GM12878 (cell line): ENCODE measurements at regions of chr6 and their contacts with region 1.

Region 1: DNA sequence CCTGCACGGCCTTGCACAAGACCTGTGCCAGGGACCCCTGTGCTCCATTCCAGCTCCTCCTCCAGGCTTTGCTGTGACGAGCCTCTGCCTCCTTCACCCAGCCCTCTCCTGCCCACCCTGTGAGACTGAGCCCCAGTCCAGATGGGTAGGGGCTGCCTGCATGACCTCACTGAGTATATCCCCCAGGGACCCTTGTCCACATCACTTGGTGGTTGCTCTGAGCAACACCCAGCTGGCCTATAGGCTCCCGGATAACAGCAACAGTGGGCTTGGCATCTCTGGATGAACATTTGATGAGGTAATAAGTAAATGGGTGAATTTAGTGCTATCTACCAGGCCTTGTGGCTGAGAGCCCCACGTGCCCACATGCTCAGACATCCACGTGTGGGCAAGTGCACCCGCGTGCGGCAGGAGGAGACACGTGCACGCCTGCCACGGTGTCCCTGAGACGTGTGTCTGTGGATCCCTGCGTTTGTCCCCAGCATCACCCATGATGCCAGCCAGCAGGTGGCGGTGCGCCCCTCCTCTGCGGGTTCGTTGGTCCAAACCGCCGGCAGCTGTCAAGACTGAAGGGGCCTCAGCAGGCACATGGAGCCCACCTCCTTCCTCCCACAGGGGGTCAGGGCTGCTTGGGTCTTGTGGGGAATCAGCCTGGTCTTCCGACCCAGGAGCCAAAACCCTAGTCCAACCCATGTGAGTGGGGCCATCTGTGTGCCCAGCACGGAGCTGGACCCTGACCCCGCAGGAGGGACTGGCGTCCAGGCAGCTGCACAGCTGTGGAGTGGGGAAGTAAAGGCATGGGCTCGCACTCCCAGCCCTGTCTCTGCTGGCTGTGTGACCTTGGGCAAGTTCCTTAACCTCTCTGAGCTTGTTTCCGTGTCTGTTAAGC is 45.9 kb downstream of the FGD2 start:
- DNase-seq: peak; percentile 59
- ATAC-seq: peak; percentile 88
- H3K4me3 ChIP-seq: no peak overlapping the region
- H3K27ac ChIP-seq: no peak overlapping the region
- H3K4me1 ChIP-seq: peaks cover 40% of the 10 kb centered on the region
- H3K27me3 ChIP-seq: no peaks in the 10 kb centered on the region
- CTCF ChIP-seq: peak; percentile 88 to 95 (median 93); a peak in 5 of 6 replicates
- EP300 ChIP-seq: no peak
- POLR2A ChIP-seq: no peak
- RAD21 ChIP-seq: peak; percentile 93

Region 2: DNA sequence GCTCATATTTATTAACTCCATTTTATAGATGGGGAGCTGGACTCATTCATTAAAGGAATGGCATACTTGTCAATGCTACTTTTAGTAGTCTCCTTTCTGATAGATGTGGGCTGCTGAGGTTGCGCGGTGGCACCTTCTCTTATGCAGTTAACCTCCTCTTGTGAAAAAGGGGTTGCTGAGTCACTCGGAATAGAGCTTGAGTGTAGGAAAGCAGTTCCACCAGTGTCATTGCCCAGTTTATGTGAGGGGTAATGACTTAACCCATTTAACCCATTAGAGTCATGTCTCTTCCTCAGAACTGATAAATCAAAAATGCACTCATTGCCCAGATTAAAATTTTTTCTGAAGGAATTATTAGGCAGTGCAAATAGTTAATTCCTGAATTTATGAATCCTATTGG is 1017.4 kb before region 1 on chr6:
- CTCF ChIA-PET with region 1: no interaction called
- POLR2A ChIA-PET with region 1: no interaction called
- RAD21 ChIA-PET with region 1: no interaction called
- SMC1A ChIA-PET with region 1: no interaction called
- in situ Hi-C with region 1: no loop called
- intact Hi-C with region 1: no loop called
- DNase-seq: no peak
- ATAC-seq: peak; percentile 55
- H3K4me3 ChIP-seq: peak overlapping the region; percentile 9; the same call in 1 of the 2 replicates
- H3K27ac ChIP-seq: peak overlapping the region; percentile 27
- H3K4me1 ChIP-seq: peaks cover 16% of the 10 kb centered on the region
- H3K27me3 ChIP-seq: no peaks in the 10 kb centered on the region
- CTCF ChIP-seq: no peak
- EP300 ChIP-seq: no peak
- POLR2A ChIP-seq: no peak
- RAD21 ChIP-seq: no peak

Region 3: DNA sequence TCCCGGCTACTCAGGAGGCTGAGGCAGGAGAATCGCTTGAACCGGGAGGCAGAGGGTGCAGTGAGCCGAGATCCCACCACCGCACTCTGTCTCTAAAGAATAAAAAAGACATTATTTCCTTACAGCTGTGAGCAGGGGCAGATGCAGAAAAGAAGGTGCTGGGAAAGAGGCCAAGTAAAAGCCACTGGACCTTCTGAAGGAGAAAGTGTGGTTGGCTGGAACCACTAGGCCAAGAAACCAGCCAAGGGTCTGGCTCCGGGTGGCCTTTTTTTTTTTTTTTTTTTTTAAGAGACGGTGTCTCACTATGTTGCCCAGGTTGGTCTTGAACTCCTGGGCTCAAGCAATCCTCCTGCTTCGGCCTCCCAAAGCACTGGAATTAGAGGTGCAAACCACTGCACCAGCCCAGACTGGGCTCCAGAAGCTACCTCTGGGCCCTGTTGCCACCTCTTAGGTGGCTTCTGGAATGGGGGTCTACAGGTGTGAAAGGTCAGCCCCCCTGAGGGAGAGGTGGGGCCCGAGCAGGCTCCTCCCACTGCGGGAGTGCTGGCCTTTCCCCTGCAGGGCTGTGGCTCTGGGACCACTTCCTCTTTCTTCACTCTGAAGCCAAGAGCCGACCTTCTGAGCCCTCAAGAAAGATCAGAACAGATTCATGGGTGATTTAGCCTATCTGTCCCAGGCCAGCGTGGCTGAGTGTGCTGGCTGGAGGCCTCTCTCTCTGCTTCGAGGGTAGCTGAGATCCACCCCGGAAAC is 46.1 kb before region 1 on chr6 and contains the start of gene FGD2:
- CTCF ChIA-PET with region 1: interaction called, 8 read pairs
- POLR2A ChIA-PET with region 1: no interaction called
- RAD21 ChIA-PET with region 1: interaction called, 12 read pairs
- SMC1A ChIA-PET with region 1: interaction called, 4 read pairs
- in situ Hi-C with region 1: no loop called
- intact Hi-C with region 1: no loop called
- DNase-seq: no peak
- ATAC-seq: peak; percentile 87
- H3K4me3 ChIP-seq: peak within 1 kb of the TSS; percentile 81
- H3K27ac ChIP-seq: peak within 1 kb of the TSS; percentile 88
- H3K4me1 ChIP-seq: peaks cover 38% of the 10 kb centered on the region
- H3K27me3 ChIP-seq: no peaks in the 10 kb centered on the region
- CTCF ChIP-seq: no peak
- EP300 ChIP-seq: peak; percentile 23 to 50; a peak in 1 of 4 replicates
- POLR2A ChIP-seq: peak; percentile 75
- RAD21 ChIP-seq: no peak
- polyA plus RNA-seq, gene FGD2: 5.2 to 11.3 TPM

Region 4: DNA sequence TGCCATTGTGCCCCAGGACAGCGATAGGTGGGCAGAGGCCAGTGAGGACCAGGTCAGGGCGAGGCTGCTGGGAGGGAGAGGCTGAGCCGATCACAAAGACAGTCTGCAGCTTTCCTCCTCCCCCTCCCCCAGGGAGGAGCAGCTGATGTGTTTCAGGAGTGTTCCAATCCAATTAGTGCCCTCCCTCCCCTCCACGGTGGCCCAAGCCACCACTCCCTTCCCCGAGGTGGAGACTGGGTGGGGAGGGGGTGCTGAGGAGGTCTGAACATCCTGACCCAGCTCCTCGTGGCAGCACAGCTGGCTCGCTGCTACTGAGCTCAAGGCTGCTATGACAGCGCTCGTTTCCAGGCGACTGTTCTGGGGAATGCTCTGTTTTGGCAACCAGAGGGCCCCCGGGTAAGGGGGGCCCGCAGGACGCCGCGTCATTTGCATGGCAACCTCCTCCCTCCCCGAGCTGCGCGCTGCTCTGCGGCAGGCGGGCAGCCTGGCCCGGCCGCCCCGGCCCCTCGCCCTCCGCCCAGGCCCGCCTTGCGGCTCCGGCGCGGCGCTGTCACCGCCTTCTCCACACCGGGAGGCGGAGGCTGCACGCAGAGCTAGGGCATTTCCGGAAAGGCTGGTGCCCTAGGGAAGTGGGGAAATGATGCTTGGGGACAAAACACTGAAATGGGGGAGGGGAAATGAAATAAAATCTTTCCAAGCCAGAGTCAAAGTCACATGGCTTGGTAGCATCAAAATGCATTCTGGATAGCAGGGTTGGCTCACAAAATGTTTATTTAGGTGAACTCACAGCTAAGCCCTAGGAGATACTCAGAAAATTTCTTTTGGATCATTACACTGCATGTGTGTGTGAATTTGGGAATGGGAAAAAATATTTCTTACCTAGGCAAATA is 51.1 kb after region 1 on chr6:
- CTCF ChIA-PET with region 1: interaction called, 8 read pairs
- POLR2A ChIA-PET with region 1: no interaction called
- RAD21 ChIA-PET with region 1: interaction called, 16 read pairs
- SMC1A ChIA-PET with region 1: no interaction called
- in situ Hi-C with region 1: no loop called
- intact Hi-C with region 1: loop called (anchors 5 kb)
- DNase-seq: no peak
- ATAC-seq: peak; percentile 93
- H3K4me3 ChIP-seq: peak overlapping the region; percentile 47
- H3K27ac ChIP-seq: no peak overlapping the region
- H3K4me1 ChIP-seq: peaks cover 35% of the 10 kb centered on the region
- H3K27me3 ChIP-seq: no peaks in the 10 kb centered on the region
- CTCF ChIP-seq: no peak
- EP300 ChIP-seq: peak in 1 of 2 experiments; percentile 90; a peak in 2 of 4 replicates
- POLR2A ChIP-seq: peak; percentile 41; the same call in 1 of the 2 replicates
- RAD21 ChIP-seq: no peak

Region 5: DNA sequence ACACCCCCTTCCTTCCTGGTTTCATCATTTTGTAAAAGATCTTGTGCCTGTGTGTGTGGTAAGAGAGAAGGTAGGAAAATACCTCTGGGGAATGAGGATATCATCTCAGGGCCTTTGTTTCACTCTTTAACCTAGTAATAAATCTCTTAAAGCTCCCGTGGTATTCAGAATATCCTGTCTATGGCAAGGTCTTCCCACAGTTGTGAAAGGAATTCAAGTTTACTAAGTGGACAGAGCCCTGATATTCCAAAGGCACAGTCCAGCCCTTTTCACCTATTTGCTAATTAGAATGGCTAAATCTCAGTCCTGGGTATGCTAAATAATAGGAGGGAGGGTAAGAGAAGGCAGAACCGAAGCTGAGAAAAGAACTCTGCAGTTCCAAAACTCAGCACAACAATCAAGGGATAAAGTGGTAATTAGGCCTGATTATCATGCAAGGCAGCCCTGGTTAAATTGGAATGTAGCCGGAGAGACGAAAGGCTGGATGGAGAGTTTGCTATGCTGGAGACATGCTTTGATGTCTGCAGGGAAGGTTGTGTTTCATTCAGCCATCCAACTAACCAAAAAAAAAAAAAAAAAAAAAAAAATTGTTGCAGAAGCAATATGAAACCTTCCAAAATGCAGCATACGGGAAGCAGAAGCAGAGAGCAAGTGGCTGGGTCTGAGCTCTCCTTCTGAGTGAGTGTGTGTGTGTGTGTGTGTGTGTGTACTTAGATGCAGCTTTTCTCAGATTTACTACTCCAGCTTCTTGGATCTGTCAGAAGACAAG is 90.1 kb after region 1 on chr6:
- CTCF ChIA-PET with region 1: interaction called, 11 read pairs
- POLR2A ChIA-PET with region 1: no interaction called
- RAD21 ChIA-PET with region 1: no interaction called
- SMC1A ChIA-PET with region 1: interaction called, 6 read pairs
- in situ Hi-C with region 1: no loop called
- intact Hi-C with region 1: no loop called
- DNase-seq: no peak
- ATAC-seq: peak; percentile 44
- H3K4me3 ChIP-seq: no peak overlapping the region
- H3K27ac ChIP-seq: no peak overlapping the region
- H3K4me1 ChIP-seq: peaks cover 47% of the 10 kb centered on the region
- H3K27me3 ChIP-seq: no peaks in the 10 kb centered on the region
- CTCF ChIP-seq: no peak
- EP300 ChIP-seq: no peak
- POLR2A ChIP-seq: no peak
- RAD21 ChIP-seq: no peak

Region 6: DNA sequence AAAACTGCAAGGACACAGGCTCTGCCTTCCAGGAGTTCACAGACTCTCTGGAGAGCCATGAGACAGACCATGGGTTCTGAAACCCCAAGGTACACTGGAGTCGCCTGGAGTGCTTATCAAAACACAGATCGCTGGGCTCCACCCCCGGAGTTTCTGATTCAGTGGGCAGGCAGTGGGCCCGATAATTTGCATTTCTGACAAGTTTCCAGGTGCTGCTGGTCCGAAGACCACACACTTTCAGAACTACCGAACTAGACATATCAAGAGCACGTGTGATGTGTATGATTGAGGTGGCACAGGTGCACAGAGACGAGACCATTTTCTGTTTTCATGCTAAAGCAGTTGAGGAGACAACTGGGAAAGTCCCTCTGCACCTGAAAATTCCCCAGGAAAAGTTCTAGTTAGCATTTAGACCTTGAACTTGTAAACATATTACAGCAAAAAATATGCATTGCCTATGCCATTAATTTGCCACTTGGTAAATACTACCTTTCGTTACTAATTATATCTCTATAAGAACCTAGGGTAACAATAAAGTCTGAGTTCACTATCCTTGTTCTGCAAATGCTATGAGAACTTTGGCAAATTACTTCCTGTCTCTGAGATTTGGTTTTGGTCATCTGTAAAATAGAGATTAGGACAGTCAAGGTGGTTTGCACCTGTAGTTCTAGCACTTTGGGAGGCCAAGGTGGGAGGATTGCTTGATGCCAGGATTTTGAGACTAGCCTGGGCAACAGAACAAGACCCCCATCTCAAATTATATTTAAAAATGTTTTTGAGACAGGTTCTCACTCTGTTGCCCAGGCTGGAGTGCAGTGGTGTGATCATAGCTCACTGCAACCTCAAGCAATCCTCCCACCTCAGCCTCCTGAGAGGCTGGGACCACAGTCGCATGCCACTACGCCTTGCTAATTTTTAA is 104.3 kb after region 1 on chr6:
- CTCF ChIA-PET with region 1: interaction called, 21 read pairs
- POLR2A ChIA-PET with region 1: interaction called, 4 read pairs
- RAD21 ChIA-PET with region 1: interaction called, 11 read pairs
- SMC1A ChIA-PET with region 1: interaction called, 10 read pairs
- in situ Hi-C with region 1: no loop called
- intact Hi-C with region 1: no loop called
- DNase-seq: peak; percentile 97
- ATAC-seq: peak; percentile 91
- H3K4me3 ChIP-seq: no peak overlapping the region; the same call in 1 of the 2 replicates
- H3K27ac ChIP-seq: peak overlapping the region; percentile 83
- H3K4me1 ChIP-seq: peaks cover 55% of the 10 kb centered on the region
- H3K27me3 ChIP-seq: no peaks in the 10 kb centered on the region
- CTCF ChIP-seq: no peak
- EP300 ChIP-seq: peak; percentile 89 to 92
- POLR2A ChIP-seq: peak; percentile 60
- RAD21 ChIP-seq: no peak

Region 7: GRCh38 chr6:37177077-37177934 is 125.9 kb after region 1 on chr6:
- CTCF ChIA-PET with region 1: interaction called, 260 read pairs
- POLR2A ChIA-PET with region 1: interaction called, 43 read pairs
- RAD21 ChIA-PET with region 1: interaction called, 255 read pairs
- SMC1A ChIA-PET with region 1: interaction called, 266 read pairs
- in situ Hi-C with region 1: loop called (anchors 5 kb)
- intact Hi-C with region 1: loop called (anchors 1 kb)
- DNase-seq: no peak
- ATAC-seq: no peak
- H3K4me3 ChIP-seq: no peak overlapping the region
- H3K27ac ChIP-seq: no peak overlapping the region
- H3K4me1 ChIP-seq: peaks cover 26% of the 10 kb centered on the region
- H3K27me3 ChIP-seq: no peaks in the 10 kb centered on the region
- CTCF ChIP-seq: no peak
- EP300 ChIP-seq: no peak
- POLR2A ChIP-seq: no peak
- RAD21 ChIP-seq: no peak

Region 8: GRCh38 chr6:37207903-37208456 is 156.6 kb after region 1 on chr6:
- CTCF ChIA-PET with region 1: interaction called, 126 read pairs
- POLR2A ChIA-PET with region 1: no interaction called
- RAD21 ChIA-PET with region 1: interaction called, 36 read pairs
- SMC1A ChIA-PET with region 1: interaction called, 30 read pairs
- in situ Hi-C with region 1: no loop called
- intact Hi-C with region 1: loop called (anchors 1 kb)
- DNase-seq: peak; percentile 28
- ATAC-seq: peak; percentile 96
- H3K4me3 ChIP-seq: no peak overlapping the region
- H3K27ac ChIP-seq: no peak overlapping the region
- H3K4me1 ChIP-seq: peaks cover 3% of the 10 kb centered on the region; the same call in 1 of the 2 replicates
- H3K27me3 ChIP-seq: no peaks in the 10 kb centered on the region
- CTCF ChIP-seq: peak; percentile 87 to 93 (median 87)
- EP300 ChIP-seq: no peak
- POLR2A ChIP-seq: no peak
- RAD21 ChIP-seq: peak; percentile 63

Region 9: DNA sequence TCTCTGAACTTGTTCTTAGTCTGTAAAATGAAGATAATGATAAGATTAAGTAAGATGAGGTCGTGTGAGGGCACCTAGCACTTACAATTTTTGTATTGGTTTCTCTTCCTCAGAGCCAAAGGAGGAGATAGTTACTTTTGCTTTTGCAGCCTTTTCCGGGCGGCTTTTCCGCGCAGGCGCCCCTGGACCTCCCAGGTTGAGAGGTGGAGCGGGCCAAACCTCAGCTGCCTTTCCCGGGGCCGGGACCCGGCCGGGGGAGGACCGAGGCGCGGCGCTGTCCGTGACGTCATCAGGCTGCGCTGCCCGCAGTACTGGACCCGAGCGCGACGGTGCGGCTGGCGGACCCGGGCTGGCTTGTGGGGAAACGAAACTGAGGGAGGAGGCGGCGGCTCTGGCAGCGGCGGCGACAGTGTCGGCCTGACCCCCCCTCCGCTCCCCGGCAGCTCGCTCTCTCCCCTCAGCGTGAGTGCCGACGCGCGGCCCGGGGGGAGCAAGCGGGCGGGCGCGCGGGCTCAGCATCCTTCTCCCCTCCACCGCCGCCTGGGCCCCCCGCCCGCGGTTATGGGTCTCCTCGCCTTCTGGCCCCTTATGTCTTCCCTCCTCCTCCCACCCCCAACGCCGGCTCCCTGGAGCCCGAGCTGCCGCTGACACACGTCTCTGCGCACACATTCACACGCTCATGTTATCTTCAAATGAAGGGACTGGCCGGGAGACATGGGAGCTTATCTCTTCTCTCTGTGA is 381.7 kb after region 1 on chr6 and contains the start of gene CMTR1:
- CTCF ChIA-PET with region 1: no interaction called
- POLR2A ChIA-PET with region 1: no interaction called
- RAD21 ChIA-PET with region 1: no interaction called
- SMC1A ChIA-PET with region 1: no interaction called
- in situ Hi-C with region 1: no loop called
- intact Hi-C with region 1: no loop called
- DNase-seq: peak; percentile 83
- ATAC-seq: peak; percentile 91
- H3K4me3 ChIP-seq: peak within 1 kb of the TSS; percentile 97
- H3K27ac ChIP-seq: peak within 1 kb of the TSS; percentile 94
- H3K4me1 ChIP-seq: peaks cover 5% of the 10 kb centered on the region
- H3K27me3 ChIP-seq: no peaks in the 10 kb centered on the region
- CTCF ChIP-seq: no peak
- EP300 ChIP-seq: peak in 1 of 2 experiments; percentile 42; a peak in 2 of 4 replicates
- POLR2A ChIP-seq: peak; percentile 90
- RAD21 ChIP-seq: no peak
- polyA plus RNA-seq, gene CMTR1: 2.7 to 3.5 TPM